Lower leg skin (tissue), 4 donors: ENCODE measurements at regions of chr10 and their contacts with region 1.

Region 1: DNA sequence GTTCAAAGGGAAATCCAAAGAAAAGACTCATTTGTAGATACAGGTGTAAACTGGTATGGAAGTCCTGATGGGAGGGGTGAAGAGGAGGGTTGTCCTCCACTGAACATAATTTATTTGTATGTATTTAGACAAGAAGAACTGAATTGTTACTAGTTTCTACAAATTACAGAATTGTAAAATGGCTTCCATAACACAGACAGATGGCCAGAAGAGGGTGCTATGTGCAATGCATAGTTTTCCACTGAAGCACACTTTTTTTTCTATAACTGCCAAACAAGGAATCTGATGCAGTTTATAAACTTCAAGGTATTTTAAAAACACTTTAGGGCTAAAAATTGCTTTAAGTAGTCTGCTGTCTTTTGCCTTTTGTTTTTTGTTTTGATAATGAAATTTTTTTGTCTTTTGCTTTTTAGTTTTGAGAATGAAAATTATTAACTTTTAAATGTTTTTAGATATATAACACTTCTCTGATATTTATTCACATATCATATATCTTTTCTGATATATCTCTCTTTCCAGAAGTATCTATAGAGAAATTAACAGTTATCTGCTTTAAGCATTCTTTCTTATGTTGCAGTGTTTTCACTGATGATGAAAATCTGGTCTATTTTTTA is 58.5 kb downstream of the PHYHIPL start:
- DNase-seq: no peak
- H3K4me3 ChIP-seq: no peak overlapping the region
- CTCF ChIP-seq: no peak
- POLR2A ChIP-seq: no peak

Region 2: DNA sequence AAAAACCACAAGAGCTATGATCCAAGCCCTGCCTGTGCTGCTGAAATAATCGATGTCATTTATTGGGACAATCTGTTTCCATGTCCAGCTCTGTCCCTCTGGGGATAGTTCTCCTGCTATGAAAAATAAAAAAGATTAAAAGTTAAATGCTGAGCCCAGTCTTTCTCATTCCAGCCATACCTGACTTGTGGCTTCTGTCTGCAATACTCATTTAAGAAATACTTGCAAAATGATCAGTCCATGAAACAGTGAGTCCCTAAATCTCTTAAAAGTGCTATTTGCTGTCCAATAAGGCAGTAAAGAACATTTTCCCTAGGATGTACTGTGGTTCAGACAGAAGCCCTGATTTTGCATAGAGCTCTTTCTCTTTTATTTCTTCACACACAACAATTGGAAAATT is 383.1 kb after region 1 on chr10:
- intact Hi-C with region 1: loop called (anchors 5 kb)
- DNase-seq: no peak
- H3K4me3 ChIP-seq: no peak overlapping the region
- CTCF ChIP-seq: no peak
- POLR2A ChIP-seq: no peak